ENCODE measurements at regions of chr6 and their contacts with region 1.

Region 1: DNA sequence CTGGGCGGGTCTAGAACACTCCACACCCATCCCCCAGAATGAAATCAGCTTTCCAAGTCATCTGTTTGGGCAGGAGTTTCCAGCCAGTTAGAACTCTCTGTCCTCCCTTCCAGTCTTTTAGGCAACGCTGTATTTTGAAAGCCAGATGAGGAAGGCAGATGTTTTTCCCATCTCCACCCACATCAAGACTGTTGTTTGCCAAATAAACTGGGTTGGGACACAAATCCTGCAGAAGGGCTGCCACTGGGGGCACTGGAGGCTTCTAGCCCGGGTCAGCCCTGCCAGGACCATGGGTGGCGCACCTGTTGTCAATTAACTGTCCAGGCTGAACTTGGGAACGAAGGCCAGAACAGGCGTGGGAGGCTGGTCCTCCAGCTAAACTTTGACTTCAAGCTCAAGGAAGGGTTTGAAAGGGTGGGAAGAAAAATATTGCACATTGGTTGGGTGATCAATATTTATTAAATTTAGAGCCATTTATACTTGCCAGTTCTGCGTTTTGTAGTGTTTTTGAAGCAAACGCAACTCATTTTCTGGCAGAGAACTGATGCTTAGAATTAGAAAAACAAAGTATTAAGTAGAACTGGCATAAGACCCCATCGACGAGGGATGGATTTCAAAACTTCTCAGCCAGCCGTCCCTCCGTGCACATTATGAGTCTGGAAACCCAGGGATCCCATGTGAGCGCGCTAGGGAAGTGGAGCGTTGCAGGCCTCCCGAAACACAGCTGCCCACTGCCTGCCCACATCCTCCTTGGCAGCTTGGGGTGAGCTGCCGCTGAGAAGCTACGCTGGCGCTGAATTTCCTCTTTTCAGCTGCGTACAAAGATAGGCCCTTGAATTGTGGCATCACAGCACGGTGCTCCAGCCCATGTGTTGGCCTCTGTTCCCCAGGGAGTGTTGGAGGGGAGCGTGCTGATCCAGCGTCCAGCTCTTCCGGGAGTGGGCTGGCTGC is 297.4 kb downstream of the QKI start:
- DNase-seq: peak; percentile 48
- ATAC-seq: peak; percentile 72
- H3K4me3 Mint-ChIP-seq: peak overlapping the region; percentile 63
- H3K27ac Mint-ChIP-seq: peak overlapping the region; percentile 74
- H3K4me1 Mint-ChIP-seq: peaks cover 86% of the 10 kb centered on the region
- H3K27me3 Mint-ChIP-seq: no peaks in the 10 kb centered on the region
- CTCF ChIP-seq: no peak

Region 2: GRCh38 chr6:163688739-163689362 is 23.0 kb before region 1 on chr6:
- CTCF ChIA-PET with region 1: interaction called, 4 read pairs
- POLR2A ChIA-PET with region 1: interaction called, 4 read pairs
- intact Hi-C with region 1: loop called (anchors 2 kb)
- DNase-seq: no peak
- ATAC-seq: no peak
- H3K4me3 Mint-ChIP-seq: no peak overlapping the region
- H3K27ac Mint-ChIP-seq: no peak overlapping the region
- H3K4me1 Mint-ChIP-seq: peaks cover 18% of the 10 kb centered on the region
- H3K27me3 Mint-ChIP-seq: peaks cover under 1% of the 10 kb centered on the region
- CTCF ChIP-seq: no peak

Region 3: GRCh38 chr6:163756079-163756478 is 44.2 kb after region 1 on chr6:
- CTCF ChIA-PET with region 1: interaction called, 3 read pairs
- POLR2A ChIA-PET with region 1: interaction called, 6 read pairs
- intact Hi-C with region 1: loop called (anchors 1 kb)
- DNase-seq: peak; percentile 55
- ATAC-seq: peak; percentile 96
- H3K4me3 Mint-ChIP-seq: peak overlapping the region; percentile 39
- H3K27ac Mint-ChIP-seq: peak overlapping the region; percentile 11
- H3K4me1 Mint-ChIP-seq: peaks cover 40% of the 10 kb centered on the region
- H3K27me3 Mint-ChIP-seq: peaks cover 5% of the 10 kb centered on the region
- CTCF ChIP-seq: no peak

Region 4: GRCh38 chr6:164085091-164086075 is 373.5 kb after region 1 on chr6:
- CTCF ChIA-PET with region 1: no interaction called
- POLR2A ChIA-PET with region 1: no interaction called
- intact Hi-C with region 1: no loop called
- DNase-seq: no peak
- ATAC-seq: no peak
- H3K4me3 Mint-ChIP-seq: no peak overlapping the region
- H3K27ac Mint-ChIP-seq: no peak overlapping the region
- H3K4me1 Mint-ChIP-seq: peaks cover 2% of the 10 kb centered on the region
- H3K27me3 Mint-ChIP-seq: no peaks in the 10 kb centered on the region
- CTCF ChIP-seq: no peak

Measured in activated B cell treated with CpG ODN at 0.5 μM for 24 hours (primary cell).